Pancreas (tissue), 10 donors: ENCODE measurements at regions of chr2 and their contacts with region 1.

Region 1: DNA sequence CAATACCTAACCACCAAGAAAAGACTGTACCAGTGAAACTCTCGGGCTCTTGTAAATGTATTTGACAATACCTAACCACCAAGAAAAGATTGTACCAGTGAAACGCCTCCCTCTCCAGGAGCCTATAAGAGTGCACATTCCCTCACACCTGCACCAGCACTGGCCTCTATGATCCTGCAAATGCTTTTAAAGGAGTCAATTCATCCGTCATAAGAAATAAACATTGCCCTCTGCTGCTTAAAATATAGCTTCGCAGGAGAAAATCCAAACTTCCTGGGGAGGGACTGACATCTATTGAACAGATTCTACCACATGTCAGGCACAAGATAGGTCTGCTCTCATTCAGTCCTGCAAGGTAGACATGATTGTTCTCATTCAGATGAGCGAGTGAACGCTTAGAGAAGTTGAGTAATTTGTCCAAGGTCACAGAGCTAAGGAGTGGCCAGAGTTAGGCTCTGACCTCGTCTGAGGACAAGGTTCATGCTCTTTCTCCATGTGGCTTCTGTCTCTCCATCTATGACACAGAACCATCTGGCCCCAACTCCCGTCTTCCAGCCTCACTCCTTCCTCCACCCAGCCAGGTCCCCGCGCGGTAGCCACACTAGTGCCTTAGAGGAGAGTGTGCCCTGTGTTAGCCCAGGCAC is 38.7 kb downstream of the MCFD2 start:
- DNase-seq: no peak
- ATAC-seq: peak; percentile 73 to 89 (median 82)
- H3K4me3 ChIP-seq: no peak overlapping the region
- H3K27ac ChIP-seq: no peak overlapping the region
- H3K4me1 ChIP-seq: peaks cover 0 to 4% (median 0%) of the 10 kb centered on the region in 3 donors
- H3K27me3 ChIP-seq: no peaks in the 10 kb centered on the region
- CTCF ChIP-seq: peak in 3 of 4 donors; percentile 18 to 21 (median 19)

Region 2: GRCh38 chr2:46803911-46804670 is 72.8 kb before region 1 on chr2:
- intact Hi-C with region 1: loop called in 1 of 3 experiments (anchors 5 kb)
- DNase-seq: peak in 1 of 6 donors; percentile 7
- ATAC-seq: peak in 2 of 4 donors; percentile 62 to 68
- H3K4me3 ChIP-seq: no peak overlapping the region
- H3K27ac ChIP-seq: no peak overlapping the region
- H3K4me1 ChIP-seq: no peaks in the 10 kb centered on the region
- H3K27me3 ChIP-seq: no peaks in the 10 kb centered on the region
- CTCF ChIP-seq: no peak

Region 3: GRCh38 chr2:46812361-46813024 is 64.4 kb before region 1 on chr2:
- intact Hi-C with region 1: loop called in 1 of 3 experiments (anchors 5 kb)
- DNase-seq: no peak
- ATAC-seq: peak in 3 of 4 donors; percentile 21 to 43 (median 43)
- H3K4me3 ChIP-seq: no peak overlapping the region
- H3K27ac ChIP-seq: no peak overlapping the region
- H3K4me1 ChIP-seq: no peaks in the 10 kb centered on the region
- H3K27me3 ChIP-seq: no peaks in the 10 kb centered on the region
- CTCF ChIP-seq: no peak